ENCODE measurements at regions of chr5 and their contacts with region 1.

Region 1: DNA sequence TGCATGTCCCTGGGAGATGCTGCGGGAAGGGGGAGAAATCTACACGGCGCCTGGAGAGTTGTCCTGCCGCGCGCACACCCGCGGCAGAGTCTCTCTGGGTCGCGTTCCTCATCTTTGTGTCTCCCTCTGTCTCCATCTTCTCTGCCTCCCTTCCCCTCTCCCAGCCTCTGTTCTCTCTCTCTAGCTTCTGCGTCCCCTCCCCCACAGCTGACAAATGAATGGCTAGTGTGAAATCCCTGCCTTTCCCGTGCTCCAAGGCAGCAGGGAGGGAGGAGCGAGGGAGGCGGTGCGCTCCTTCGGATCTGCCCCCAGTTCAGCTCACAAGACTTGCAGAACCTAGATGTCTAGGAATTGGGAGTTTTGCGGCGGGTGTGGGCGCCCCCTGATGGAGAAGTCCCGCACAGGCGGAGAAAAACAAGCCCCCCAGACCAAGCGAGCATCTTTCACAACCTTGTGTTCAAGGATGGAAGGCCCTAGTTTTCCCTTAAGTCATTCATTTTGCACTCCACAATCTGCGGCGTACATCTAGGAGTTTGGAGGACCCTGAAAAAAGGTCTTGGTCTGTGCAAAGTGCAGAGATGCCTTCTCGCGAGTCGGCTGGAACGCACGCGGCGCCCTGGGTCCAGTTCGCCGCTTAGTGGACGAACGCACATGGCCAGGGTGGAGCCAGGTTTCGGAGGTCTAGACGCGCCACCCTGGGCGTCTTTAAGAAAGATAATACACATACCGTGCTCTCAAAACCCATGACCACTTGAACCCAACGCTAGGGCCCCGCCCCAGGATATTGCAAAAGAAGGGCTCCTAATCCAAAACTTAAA is 2.0 kb downstream of the VCAN start:
- DNase-seq: peak; percentile 91
- ATAC-seq: peak; percentile 71
- H3K4me3 ChIP-seq: peak overlapping the region; percentile 81
- H3K27ac ChIP-seq: peak overlapping the region; percentile 87
- H3K4me1 ChIP-seq: peaks cover 31% of the 10 kb centered on the region
- H3K27me3 ChIP-seq: peaks cover 19% of the 10 kb centered on the region
- CTCF ChIP-seq: peak; percentile 92

Region 2: GRCh38 chr5:82356808-82357671 is 1116.5 kb before region 1 on chr5:
- CTCF ChIA-PET with region 1: interaction called, 3 read pairs
- POLR2A ChIA-PET with region 1: no interaction called
- intact Hi-C with region 1: loop called (anchors 2 kb)
- DNase-seq: peak; percentile 97
- ATAC-seq: peak; percentile 99
- H3K4me3 ChIP-seq: peak overlapping the region; percentile 36; the same call in 1 of the 2 replicates
- H3K27ac ChIP-seq: peak overlapping the region; percentile 98
- H3K4me1 ChIP-seq: peaks cover 30% of the 10 kb centered on the region
- H3K27me3 ChIP-seq: no peaks in the 10 kb centered on the region
- CTCF ChIP-seq: no peak

Region 3: GRCh38 chr5:82406205-82406773 is 1067.3 kb before region 1 on chr5:
- CTCF ChIA-PET with region 1: no interaction called
- POLR2A ChIA-PET with region 1: no interaction called
- intact Hi-C with region 1: loop called (anchors 1 kb)
- DNase-seq: peak; percentile 93
- ATAC-seq: peak; percentile 79
- H3K4me3 ChIP-seq: peak overlapping the region; percentile 19; the same call in 1 of the 2 replicates
- H3K27ac ChIP-seq: peak overlapping the region; percentile 98
- H3K4me1 ChIP-seq: peaks cover 28% of the 10 kb centered on the region
- H3K27me3 ChIP-seq: no peaks in the 10 kb centered on the region
- CTCF ChIP-seq: no peak

Region 4: GRCh38 chr5:82991678-82992323 is 481.8 kb before region 1 on chr5:
- CTCF ChIA-PET with region 1: no interaction called
- POLR2A ChIA-PET with region 1: no interaction called
- intact Hi-C with region 1: loop called (anchors 5 kb)
- DNase-seq: peak; percentile 91
- ATAC-seq: peak; percentile 99
- H3K4me3 ChIP-seq: no peak overlapping the region
- H3K27ac ChIP-seq: peak overlapping the region; percentile 80
- H3K4me1 ChIP-seq: peaks cover 21% of the 10 kb centered on the region
- H3K27me3 ChIP-seq: no peaks in the 10 kb centered on the region
- CTCF ChIP-seq: no peak

Region 5: GRCh38 chr5:83095957-83096539 is 377.5 kb before region 1 on chr5:
- CTCF ChIA-PET with region 1: no interaction called
- POLR2A ChIA-PET with region 1: no interaction called
- intact Hi-C with region 1: loop called (anchors 5 kb)
- DNase-seq: peak; percentile 89
- ATAC-seq: peak; percentile 97
- H3K4me3 ChIP-seq: no peak overlapping the region
- H3K27ac ChIP-seq: peak overlapping the region; percentile 38; the same call in 1 of the 2 replicates
- H3K4me1 ChIP-seq: peaks cover 39% of the 10 kb centered on the region
- H3K27me3 ChIP-seq: no peaks in the 10 kb centered on the region
- CTCF ChIP-seq: no peak

Region 6: DNA sequence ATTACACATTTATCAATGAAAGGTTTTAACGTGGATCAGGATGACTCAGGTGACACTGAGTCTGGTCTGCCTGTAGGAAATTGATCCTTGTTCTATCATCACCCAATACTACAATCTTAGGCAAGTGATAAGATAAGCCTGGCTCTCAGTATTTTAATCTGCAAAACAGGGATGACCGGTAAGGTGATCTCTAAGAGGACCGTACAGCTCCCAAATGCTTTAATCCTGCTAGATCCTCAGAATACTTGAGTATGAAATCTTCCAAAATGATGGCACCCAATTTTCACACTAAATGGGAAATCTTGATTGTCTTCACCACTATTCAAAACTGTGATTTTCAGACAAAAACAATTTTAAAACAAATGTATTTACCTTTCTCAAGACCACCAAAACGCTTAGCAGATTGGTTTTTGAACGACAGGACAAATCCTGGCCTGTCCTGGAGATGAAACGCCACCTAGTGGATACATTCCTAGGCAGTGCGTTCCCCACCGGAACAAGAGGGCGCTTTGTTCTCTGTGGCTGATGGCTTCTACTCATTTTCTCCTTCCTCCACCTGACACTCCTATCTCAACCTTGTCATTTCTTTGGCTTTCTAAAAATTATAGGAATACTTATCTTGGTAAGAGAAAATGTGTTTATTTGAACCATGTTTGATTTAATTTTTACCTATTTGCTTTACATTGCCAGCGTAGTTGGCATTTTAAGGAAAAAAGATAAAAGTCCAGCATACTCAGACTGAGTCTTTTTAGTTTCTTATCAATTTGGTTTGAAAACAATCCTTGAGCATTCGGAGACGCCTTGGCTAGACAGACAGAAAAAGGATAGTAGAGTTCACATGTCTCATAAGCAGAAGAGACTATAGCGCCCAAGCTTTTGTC is 43.2 kb before region 1 on chr5:
- CTCF ChIA-PET with region 1: no interaction called
- POLR2A ChIA-PET with region 1: no interaction called
- intact Hi-C with region 1: loop called (anchors 5 kb)
- DNase-seq: peak; percentile 78
- ATAC-seq: peak; percentile 97
- H3K4me3 ChIP-seq: no peak overlapping the region
- H3K27ac ChIP-seq: no peak overlapping the region
- H3K4me1 ChIP-seq: no peaks in the 10 kb centered on the region; the same call in 1 of the 2 replicates
- H3K27me3 ChIP-seq: no peaks in the 10 kb centered on the region
- CTCF ChIP-seq: peak; percentile 99

Region 7: DNA sequence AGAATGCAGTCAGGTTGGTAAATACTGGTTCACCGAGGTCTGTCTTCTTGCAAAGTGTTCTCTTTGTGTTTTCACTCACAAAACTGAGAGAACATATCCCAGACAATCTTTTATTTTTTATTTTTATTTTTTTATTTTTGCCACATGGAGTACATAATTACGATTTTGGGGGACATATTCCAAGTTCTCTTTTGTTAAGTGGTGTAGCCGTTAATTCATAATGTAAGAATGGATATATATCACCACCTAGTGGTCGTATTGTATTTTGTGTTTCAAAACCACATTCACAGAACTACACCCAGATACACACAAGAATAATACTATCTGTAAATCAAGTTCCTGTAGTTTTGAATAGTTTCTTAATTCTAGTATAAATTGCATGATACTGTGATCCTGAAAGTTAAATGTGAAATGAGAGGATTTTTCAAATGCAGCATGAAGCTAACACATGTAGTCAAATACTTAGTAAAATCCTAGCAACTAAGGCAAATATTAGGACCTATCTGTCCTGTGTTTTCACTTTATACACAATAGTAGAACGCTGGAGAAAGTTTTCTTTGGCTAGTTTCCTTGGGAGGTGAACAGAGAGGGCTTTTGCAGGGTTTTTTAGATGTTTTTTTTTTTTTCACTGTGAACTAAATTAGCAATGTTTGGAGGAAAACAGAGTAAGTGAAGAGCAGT is 90.7 kb after region 1 on chr5:
- CTCF ChIA-PET with region 1: interaction called, 3 read pairs
- POLR2A ChIA-PET with region 1: interaction called, 3 read pairs
- intact Hi-C with region 1: loop called (anchors 1 kb)
- DNase-seq: peak; percentile 70
- ATAC-seq: peak; percentile 63
- H3K4me3 ChIP-seq: peak overlapping the region; percentile 38; the same call in 1 of the 2 replicates
- H3K27ac ChIP-seq: peak overlapping the region; percentile 61
- H3K4me1 ChIP-seq: peaks cover 35% of the 10 kb centered on the region
- H3K27me3 ChIP-seq: no peaks in the 10 kb centered on the region
- CTCF ChIP-seq: peak; percentile 75